SK-N-SH (cell line): ENCODE measurements at regions of chr3 and their contacts with region 1.

Region 1: DNA sequence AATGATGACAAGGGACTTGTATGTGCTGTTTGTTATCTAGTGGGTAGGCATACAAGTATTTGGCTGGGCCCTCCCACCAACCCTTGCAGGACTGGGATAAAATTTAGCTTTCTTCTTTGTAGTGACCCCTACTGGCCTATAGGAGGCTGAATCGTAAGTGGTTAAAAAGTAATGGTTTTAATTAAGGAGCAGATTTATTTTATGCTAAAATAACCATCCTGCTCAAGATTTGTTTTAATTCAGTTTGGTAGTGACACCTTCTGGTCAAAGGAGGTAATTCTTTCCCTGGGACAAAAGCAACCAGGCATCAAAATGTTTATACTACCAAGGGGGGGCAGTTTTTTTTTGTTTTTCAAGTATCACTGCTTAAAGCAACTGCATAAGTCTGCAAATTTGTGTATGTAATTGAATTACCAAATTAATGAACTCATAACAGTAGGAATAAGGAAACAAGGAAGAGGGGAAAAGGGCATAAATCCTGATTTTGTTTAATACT is 70.7 kb downstream of the TOP2B start:
- DNase-seq: peak; percentile 64
- H3K4me3 ChIP-seq: peak overlapping the region in 1 of 2 experiments; percentile 20; a peak in 1 of 4 replicates
- H3K27ac ChIP-seq: peak overlapping the region; percentile 47 to 70
- H3K4me1 ChIP-seq: peaks cover 14 to 26% of the 10 kb centered on the region in 2 experiments
- H3K27me3 ChIP-seq: no peaks in the 10 kb centered on the region
- CTCF ChIP-seq: peak; percentile 96
- EP300 ChIP-seq: no peak; a peak in 1 of 4 replicates
- RAD21 ChIP-seq: peak; percentile 87

Region 2: GRCh38 chr3:24773798-24774197 is 820.3 kb before region 1 on chr3:
- CTCF ChIA-PET with region 1: interaction called, 35 read pairs
- POLR2A ChIA-PET with region 1: interaction called, 3 read pairs
- DNase-seq: peak; percentile 55
- H3K4me3 ChIP-seq: peak overlapping the region in 1 of 2 experiments; percentile 25; a peak in 1 of 4 replicates
- H3K27ac ChIP-seq: no peak overlapping the region
- H3K4me1 ChIP-seq: no peaks in the 10 kb centered on the region
- H3K27me3 ChIP-seq: no peaks in the 10 kb centered on the region
- CTCF ChIP-seq: peak; percentile 84
- EP300 ChIP-seq: no peak
- RAD21 ChIP-seq: peak; percentile 97

Region 3: DNA sequence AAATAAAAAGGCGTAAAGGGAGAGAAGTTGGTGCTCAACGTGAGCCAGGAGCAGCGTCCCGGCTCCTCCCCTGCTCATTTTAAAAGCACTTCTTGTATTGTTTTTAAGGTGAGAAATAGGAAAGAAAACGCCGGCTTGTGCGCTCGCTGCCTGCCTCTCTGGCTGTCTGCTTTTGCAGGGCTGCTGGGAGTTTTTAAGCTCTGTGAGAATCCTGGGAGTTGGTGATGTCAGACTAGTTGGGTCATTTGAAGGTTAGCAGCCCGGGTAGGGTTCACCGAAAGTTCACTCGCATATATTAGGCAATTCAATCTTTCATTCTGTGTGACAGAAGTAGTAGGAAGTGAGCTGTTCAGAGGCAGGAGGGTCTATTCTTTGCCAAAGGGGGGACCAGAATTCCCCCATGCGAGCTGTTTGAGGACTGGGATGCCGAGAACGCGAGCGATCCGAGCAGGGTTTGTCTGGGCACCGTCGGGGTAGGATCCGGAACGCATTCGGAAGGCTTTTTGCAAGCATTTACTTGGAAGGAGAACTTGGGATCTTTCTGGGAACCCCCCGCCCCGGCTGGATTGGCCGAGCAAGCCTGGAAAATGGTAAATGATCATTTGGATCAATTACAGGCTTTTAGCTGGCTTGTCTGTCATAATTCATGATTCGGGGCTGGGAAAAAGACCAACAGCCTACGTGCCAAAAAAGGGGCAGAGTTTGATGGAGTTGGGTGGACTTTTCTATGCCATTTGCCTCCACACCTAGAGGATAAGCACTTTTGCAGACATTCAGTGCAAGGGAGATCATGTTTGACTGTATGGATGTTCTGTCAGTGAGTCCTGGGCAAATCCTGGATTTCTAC is 165.9 kb before region 1 on chr3 and contains the start of gene RARB:
- CTCF ChIA-PET with region 1: interaction called, 40 read pairs
- POLR2A ChIA-PET with region 1: interaction called, 3 read pairs
- DNase-seq: peak; percentile 83
- H3K4me3 ChIP-seq: peak within 1 kb of the TSS; percentile 70 to 80
- H3K27ac ChIP-seq: peak within 1 kb of the TSS; percentile 89 to 97
- H3K4me1 ChIP-seq: peaks cover 11 to 26% of the 10 kb centered on the region in 2 experiments; a peak in 3 of 4 replicates
- H3K27me3 ChIP-seq: no peaks in the 10 kb centered on the region
- CTCF ChIP-seq: no peak
- EP300 ChIP-seq: peak; percentile 31 to 54; a peak in 2 of 4 replicates
- RAD21 ChIP-seq: peak; percentile 44
- polyA plus RNA-seq, gene RARB: 10.7 and 15.2 TPM in 2 replicates

Region 4: GRCh38 chr3:25448750-25449692 is 145.0 kb before region 1 on chr3:
- CTCF ChIA-PET with region 1: interaction called, 25 read pairs
- POLR2A ChIA-PET with region 1: no interaction called
- DNase-seq: peak; percentile 64
- H3K4me3 ChIP-seq: no peak overlapping the region
- H3K27ac ChIP-seq: peak overlapping the region; percentile 50 to 82
- H3K4me1 ChIP-seq: peaks cover 18 to 33% of the 10 kb centered on the region in 2 experiments
- H3K27me3 ChIP-seq: no peaks in the 10 kb centered on the region
- CTCF ChIP-seq: no peak
- EP300 ChIP-seq: peak; percentile 18 to 71; a peak in 3 of 4 replicates
- RAD21 ChIP-seq: peak; percentile 36

Region 5: DNA sequence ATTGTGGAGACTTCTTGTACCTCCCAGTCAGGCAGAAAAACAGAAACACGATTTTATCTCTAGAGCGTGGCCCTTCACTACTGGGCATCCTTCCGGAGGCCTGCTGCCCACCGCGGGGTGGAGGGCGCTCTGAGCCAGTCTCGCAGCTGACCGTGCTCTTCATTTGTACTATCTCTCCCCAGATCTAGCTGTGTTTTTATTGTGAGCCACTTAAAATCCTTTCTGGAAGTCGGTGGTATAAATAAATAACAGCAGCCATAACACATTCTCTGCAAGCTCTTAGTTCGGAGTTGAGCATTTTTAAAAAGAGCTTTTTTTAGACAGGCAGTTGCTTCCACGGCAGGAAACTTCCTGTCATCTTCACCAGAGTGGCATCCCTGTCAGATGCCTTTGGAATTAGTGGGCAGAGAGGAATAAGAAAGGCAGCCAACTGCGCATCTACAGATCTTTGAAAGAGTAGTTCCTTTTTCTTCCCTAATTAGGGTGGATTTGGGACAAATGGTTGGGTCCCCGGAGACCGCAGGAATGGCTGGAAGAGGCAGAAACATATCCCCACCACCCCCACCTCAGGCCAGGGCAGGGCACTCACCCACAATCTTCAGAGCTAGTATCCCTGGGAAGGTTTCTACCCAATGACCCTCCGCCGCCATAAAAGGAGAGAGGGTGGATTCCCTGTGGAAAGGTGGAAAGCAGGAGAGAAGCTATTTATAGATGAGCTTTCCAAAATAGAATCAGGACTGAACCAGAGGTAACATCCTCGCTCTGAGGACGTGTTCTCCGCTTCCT is 20.5 kb before region 1 on chr3:
- CTCF ChIA-PET with region 1: interaction called, 26 read pairs
- POLR2A ChIA-PET with region 1: no interaction called
- DNase-seq: peak; percentile 79
- H3K4me3 ChIP-seq: peak overlapping the region; percentile 12 to 36; a peak in 3 of 4 replicates
- H3K27ac ChIP-seq: peak overlapping the region; percentile 93 to 95
- H3K4me1 ChIP-seq: peaks cover 15 to 32% of the 10 kb centered on the region in 2 experiments
- H3K27me3 ChIP-seq: no peaks in the 10 kb centered on the region
- CTCF ChIP-seq: 0 out of 2 replicates have a peak, but pooled peaks have one; percentile 15
- EP300 ChIP-seq: peak; percentile 71 to 83
- RAD21 ChIP-seq: peak; percentile 36